ENCODE measurements at regions of chr11 and their contacts with region 1.

Region 1: GRCh38 chr11:119134389-119134978 is 13.1 kb downstream of the HINFP start:
- DNase-seq: peak; percentile 31
- H3K4me3 ChIP-seq: no peak overlapping the region
- H3K27ac ChIP-seq: no peak overlapping the region
- H3K4me1 ChIP-seq: no peaks in the 10 kb centered on the region
- H3K27me3 ChIP-seq: no peaks in the 10 kb centered on the region
- CTCF ChIP-seq: peak; percentile 72

Region 2: DNA sequence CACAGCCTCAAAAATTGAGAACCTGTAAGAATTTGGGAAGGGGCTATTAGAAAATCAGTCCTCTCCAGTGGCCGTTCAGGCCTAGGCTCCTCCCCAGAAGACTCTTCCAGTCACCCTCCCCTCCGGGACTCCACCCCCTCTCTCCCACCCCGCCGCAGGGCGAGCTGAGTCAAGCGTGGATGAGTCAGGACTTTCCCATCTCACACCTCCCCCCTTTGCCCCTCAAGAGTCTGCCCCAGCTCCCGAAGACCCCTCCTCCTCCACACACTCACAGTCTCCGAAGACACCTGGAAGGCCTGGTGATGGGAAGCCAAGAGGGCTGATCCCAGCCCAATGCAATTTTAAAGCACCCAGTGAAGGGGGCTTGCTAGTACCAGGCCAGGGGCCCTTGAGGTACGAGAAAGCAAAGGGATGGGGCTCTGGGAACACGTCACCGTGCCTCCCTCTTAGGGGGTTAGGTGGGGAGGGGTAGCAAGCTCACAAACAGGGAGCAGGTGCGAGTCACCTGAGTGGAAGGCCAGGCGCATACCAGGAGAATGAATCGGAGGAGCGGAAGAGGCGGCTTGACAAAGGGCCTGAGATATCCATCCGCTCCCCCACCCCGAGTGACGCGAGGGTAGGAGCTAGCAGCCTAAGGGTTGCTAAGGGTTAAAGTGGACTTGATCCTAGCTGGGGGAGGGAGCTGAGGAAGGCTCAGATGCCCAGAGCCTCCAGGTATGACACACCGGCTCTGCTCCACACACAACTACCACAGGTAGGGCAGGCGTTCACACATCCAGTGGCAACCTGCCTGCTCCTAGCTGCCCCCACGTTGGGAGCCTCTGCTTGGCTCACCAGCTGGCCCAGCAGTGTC is 222.4 kb before region 1 on chr11:
- CTCF ChIA-PET with region 1: no interaction called
- POLR2A ChIA-PET with region 1: no interaction called
- intact Hi-C with region 1: no loop called
- DNase-seq: peak; percentile 94
- H3K4me3 ChIP-seq: no peak overlapping the region
- H3K27ac ChIP-seq: peak overlapping the region; percentile 88
- H3K4me1 ChIP-seq: peaks cover 97% of the 10 kb centered on the region
- H3K27me3 ChIP-seq: no peaks in the 10 kb centered on the region
- CTCF ChIP-seq: no peak

Region 3: DNA sequence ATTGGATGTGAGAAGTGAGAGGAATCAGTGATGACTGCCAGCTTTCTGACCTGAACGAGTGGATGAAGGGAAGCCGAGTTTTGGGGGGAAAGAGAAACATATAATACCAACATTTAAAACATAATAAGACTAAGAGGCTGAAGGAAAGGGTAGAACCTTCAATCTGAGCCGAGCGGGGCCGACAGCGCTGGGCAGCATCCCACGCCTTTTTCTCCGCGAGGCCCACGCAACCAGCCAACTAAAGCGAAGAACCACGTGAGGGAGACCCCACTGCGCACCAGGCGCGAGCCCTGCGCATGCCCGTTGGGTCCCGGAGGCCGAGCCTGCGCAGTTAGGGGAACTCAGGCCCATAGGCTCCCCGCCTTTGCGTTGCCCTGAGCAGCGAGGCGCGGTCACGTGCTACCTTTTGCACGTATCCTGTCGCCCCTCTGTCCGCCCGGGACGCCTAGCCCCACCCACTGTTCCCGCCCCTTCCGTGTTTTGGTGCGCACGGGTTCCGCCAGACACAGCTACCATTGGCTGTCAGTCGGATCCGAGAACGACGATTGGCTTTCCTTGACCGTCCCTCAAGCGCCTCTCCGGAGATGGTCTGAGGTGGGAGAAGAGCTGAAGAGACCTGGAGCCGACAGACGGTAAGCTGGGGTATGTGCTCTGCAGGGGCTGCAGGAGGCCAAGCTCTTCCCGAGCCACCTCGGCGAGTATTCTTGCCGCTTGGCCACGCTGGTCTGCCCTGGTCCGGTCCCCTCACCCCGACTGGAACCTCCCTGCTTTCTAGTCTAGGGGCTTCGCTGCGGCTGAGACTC is 13.3 kb before region 1 on chr11 and contains the start of gene HINFP:
- CTCF ChIA-PET with region 1: no interaction called
- POLR2A ChIA-PET with region 1: interaction called, 15 read pairs
- intact Hi-C with region 1: no loop called
- DNase-seq: peak; percentile 100
- H3K4me3 ChIP-seq: peak within 1 kb of the TSS; percentile 75
- H3K27ac ChIP-seq: peak within 1 kb of the TSS; percentile 71
- H3K4me1 ChIP-seq: peaks cover 14% of the 10 kb centered on the region
- H3K27me3 ChIP-seq: no peaks in the 10 kb centered on the region
- CTCF ChIP-seq: no peak
- total RNA-seq, gene HINFP: 31.7 and 31.9 TPM in 2 replicates

Measured in A673 (cell line).